Caco-2 (cell line): ENCODE measurements at regions of chr14 and their contacts with region 1.

Region 1: GRCh38 chr14:59189786-59190771 is 1.6 kb downstream of the DAAM1 start:
- DNase-seq: peak; percentile 78 to 84
- H3K4me3 ChIP-seq: peak overlapping the region; percentile 89
- H3K4me3 Mint-ChIP-seq: peak overlapping the region; percentile 96
- H3K27ac Mint-ChIP-seq: peak overlapping the region; percentile 31
- H3K4me1 ChIP-seq: 0 out of 2 replicates have a peak, but pooled peaks cover 5% of the 10 kb centered on the region
- H3K4me1 Mint-ChIP-seq: peaks cover 11% of the 10 kb centered on the region
- H3K27me3 ChIP-seq: no peaks in the 10 kb centered on the region
- H3K27me3 Mint-ChIP-seq: no peaks in the 10 kb centered on the region
- CTCF ChIP-seq: no peak

Region 2: DNA sequence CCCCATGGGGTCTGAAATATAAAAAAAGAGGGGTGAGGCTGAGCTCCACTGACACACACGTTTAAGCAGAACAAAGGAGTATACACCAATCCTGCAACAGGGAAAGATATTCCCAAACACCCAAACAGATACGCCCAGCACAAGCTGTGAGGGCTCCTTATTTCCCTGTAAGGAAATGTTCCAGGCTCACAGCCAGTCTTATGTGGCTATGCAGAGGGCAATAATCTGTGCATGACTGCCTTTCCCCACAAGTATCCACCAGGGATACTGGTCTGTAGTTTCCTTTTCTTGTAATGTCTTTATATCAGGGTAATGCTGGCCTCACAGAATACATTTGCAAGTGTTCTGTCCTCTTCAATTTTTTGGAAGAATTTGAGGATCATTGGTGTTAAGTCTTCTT is 143.3 kb before region 1 on chr14:
- CTCF ChIA-PET with region 1: no interaction called
- POLR2A ChIA-PET with region 1: no interaction called
- intact Hi-C with region 1: no loop called
- DNase-seq: no peak
- H3K4me3 ChIP-seq: no peak overlapping the region
- H3K4me3 Mint-ChIP-seq: no peak overlapping the region
- H3K27ac Mint-ChIP-seq: no peak overlapping the region
- H3K4me1 ChIP-seq: no peaks in the 10 kb centered on the region
- H3K4me1 Mint-ChIP-seq: no peaks in the 10 kb centered on the region
- H3K27me3 ChIP-seq: no peaks in the 10 kb centered on the region; the same call in 1 of the 2 replicates
- H3K27me3 Mint-ChIP-seq: peaks cover 7% of the 10 kb centered on the region
- CTCF ChIP-seq: no peak

Region 3: GRCh38 chr14:59229653-59230406 is 39.8 kb after region 1 on chr14:
- CTCF ChIA-PET with region 1: no interaction called
- POLR2A ChIA-PET with region 1: no interaction called
- intact Hi-C with region 1: no loop called
- DNase-seq: no peak
- H3K4me3 ChIP-seq: no peak overlapping the region
- H3K4me3 Mint-ChIP-seq: no peak overlapping the region
- H3K27ac Mint-ChIP-seq: no peak overlapping the region
- H3K4me1 ChIP-seq: no peaks in the 10 kb centered on the region
- H3K4me1 Mint-ChIP-seq: no peaks in the 10 kb centered on the region
- H3K27me3 ChIP-seq: no peaks in the 10 kb centered on the region
- H3K27me3 Mint-ChIP-seq: no peaks in the 10 kb centered on the region
- CTCF ChIP-seq: no peak

Region 4: GRCh38 chr14:59313144-59313651 is 123.1 kb after region 1 on chr14:
- CTCF ChIA-PET with region 1: interaction called, 5 read pairs
- POLR2A ChIA-PET with region 1: no interaction called
- intact Hi-C with region 1: loop called (anchors 2 kb)
- DNase-seq: no peak
- H3K4me3 ChIP-seq: no peak overlapping the region
- H3K4me3 Mint-ChIP-seq: no peak overlapping the region
- H3K27ac Mint-ChIP-seq: no peak overlapping the region
- H3K4me1 ChIP-seq: peaks cover 16% of the 10 kb centered on the region
- H3K4me1 Mint-ChIP-seq: peaks cover 10% of the 10 kb centered on the region
- H3K27me3 ChIP-seq: no peaks in the 10 kb centered on the region
- H3K27me3 Mint-ChIP-seq: no peaks in the 10 kb centered on the region
- CTCF ChIP-seq: no peak